ENCODE measurements at regions of chr3 and their contacts with region 1.

Region 1: DNA sequence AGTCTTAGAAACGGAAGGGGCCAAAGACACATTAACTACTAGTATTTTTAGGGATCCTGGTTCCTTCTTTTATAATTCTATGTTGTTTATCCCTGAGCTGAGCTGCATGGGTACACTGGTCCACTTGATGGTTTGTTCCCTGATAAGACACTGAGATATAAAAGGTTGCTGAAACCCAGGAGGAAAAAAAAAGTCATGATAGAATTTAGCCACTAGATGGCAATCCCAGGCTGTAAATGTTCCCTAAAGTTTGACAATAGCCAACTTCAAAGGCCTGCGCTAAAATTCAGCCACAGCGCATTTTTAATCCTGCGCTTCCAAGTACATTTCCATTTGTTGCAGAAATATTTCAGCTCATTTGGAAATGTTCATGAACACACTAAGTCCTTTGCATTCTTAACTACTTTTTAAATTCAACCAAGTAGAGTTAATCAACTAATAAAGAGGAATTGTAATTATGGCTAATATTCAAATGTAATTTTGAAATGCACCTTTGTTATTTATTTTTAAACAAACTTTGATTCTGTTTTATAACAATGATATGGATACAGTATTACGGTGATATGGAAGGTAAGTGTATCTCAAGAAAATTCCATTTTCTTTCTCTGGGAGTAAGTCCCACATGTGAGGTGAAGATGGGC is 249.3 kb upstream of the FEZF2 start:
- DNase-seq: peak; percentile 31
- ATAC-seq: peak; percentile 40; the same call in 1 of the 2 replicates
- H3K4me3 ChIP-seq: no peak overlapping the region
- H3K27ac ChIP-seq: no peak overlapping the region
- H3K4me1 ChIP-seq: no peaks in the 10 kb centered on the region
- H3K27me3 ChIP-seq: peaks cover 39% of the 10 kb centered on the region
- CTCF ChIP-seq: peak; percentile 43 to 65 (median 48); a peak in 5 of 6 replicates
- POLR2A ChIP-seq: no peak
- RAD21 ChIP-seq: peak; percentile 65

Region 2: DNA sequence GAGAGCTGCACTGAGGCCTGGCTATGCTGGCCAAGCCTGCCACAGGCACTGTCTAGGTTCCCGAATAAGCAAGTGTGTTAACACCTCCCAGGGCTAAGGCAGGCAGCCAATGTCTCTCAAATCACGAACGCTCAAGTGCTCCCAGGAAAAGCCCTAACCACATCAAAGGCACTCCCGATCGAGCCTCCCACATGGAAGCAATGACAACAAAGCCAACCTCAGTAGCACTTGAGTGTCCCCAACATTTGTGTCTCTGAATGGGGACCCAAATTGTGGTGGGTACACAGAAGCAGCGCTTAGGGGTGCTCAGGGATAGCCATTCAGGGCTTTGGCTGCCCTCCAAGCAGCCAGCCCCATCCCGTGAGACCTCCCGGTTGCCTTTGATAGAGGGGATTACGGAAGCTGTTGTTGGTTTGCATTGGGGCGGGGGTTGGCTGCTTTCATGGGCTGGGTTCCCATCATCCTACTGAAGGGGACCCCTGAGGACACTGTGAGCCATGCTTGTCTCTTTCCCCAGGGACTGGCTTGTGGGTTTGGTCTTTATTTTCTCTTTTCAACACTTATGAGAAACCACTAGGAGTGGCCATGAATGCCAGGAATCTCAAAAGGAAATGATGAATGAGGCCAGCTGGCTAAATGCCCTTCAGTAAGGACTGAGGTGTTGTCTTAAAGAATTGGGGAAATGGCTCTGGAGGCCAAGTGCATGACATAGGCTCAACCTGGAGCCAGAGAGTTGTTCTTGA is 15.2 kb before region 1 on chr3:
- CTCF ChIA-PET with region 1: no interaction called
- POLR2A ChIA-PET with region 1: no interaction called
- RAD21 ChIA-PET with region 1: no interaction called
- intact Hi-C with region 1: no loop called
- DNase-seq: no peak
- ATAC-seq: peak; percentile 74
- H3K4me3 ChIP-seq: no peak overlapping the region
- H3K27ac ChIP-seq: no peak overlapping the region
- H3K4me1 ChIP-seq: peaks cover 6 to 40% of the 10 kb centered on the region in 2 experiments
- H3K27me3 ChIP-seq: 0 out of 2 replicates have a peak, but pooled peaks cover 9% of the 10 kb centered on the region
- CTCF ChIP-seq: no peak
- POLR2A ChIP-seq: no peak
- RAD21 ChIP-seq: no peak

Region 3: DNA sequence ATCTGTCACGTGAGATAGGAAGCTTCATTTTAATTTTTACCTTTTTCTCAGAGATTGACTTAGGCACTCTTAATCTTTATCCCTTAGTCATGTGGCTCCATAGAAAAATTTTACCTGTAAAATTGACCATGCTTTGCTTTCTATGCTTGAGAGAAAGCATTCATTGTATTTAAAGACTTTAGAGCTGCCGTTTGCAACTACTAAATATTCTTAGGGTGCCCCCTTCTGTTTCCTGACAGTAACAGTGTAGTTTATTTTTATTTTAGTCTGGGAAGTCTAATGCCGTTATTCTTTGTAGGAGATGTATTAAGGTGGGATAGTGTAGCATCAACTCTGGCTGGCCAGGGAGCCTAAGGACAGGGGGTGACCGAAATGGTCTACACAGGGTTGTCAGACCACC is 571.0 kb after region 1 on chr3:
- CTCF ChIA-PET with region 1: no interaction called
- POLR2A ChIA-PET with region 1: no interaction called
- RAD21 ChIA-PET with region 1: no interaction called
- intact Hi-C with region 1: loop called (anchors 2 kb)
- DNase-seq: peak; percentile 3
- ATAC-seq: peak; percentile 44; the same call in 1 of the 2 replicates
- H3K4me3 ChIP-seq: no peak overlapping the region
- H3K27ac ChIP-seq: no peak overlapping the region
- H3K4me1 ChIP-seq: no peaks in the 10 kb centered on the region
- H3K27me3 ChIP-seq: no peaks in the 10 kb centered on the region
- CTCF ChIP-seq: peak; percentile 5 to 47 (median 45); a peak in 3 of 6 replicates
- POLR2A ChIP-seq: no peak
- RAD21 ChIP-seq: peak; percentile 65

Region 4: GRCh38 chr3:63228087-63229023 is 605.7 kb after region 1 on chr3:
- CTCF ChIA-PET with region 1: no interaction called
- POLR2A ChIA-PET with region 1: no interaction called
- RAD21 ChIA-PET with region 1: no interaction called
- intact Hi-C with region 1: loop called (anchors 2 kb)
- DNase-seq: peak; percentile 16
- ATAC-seq: peak; percentile 53
- H3K4me3 ChIP-seq: no peak overlapping the region
- H3K27ac ChIP-seq: no peak overlapping the region
- H3K4me1 ChIP-seq: no peaks in the 10 kb centered on the region
- H3K27me3 ChIP-seq: no peaks in the 10 kb centered on the region
- CTCF ChIP-seq: peak; percentile 22 to 46 (median 38); a peak in 4 of 6 replicates
- POLR2A ChIP-seq: no peak
- RAD21 ChIP-seq: peak; percentile 54

Region 5: GRCh38 chr3:63333842-63334241 is 711.2 kb after region 1 on chr3:
- CTCF ChIA-PET with region 1: no interaction called
- POLR2A ChIA-PET with region 1: no interaction called
- RAD21 ChIA-PET with region 1: no interaction called
- intact Hi-C with region 1: loop called (anchors 2 kb)
- DNase-seq: no peak
- ATAC-seq: no peak
- H3K4me3 ChIP-seq: no peak overlapping the region
- H3K27ac ChIP-seq: no peak overlapping the region
- H3K4me1 ChIP-seq: no peaks in the 10 kb centered on the region
- H3K27me3 ChIP-seq: peaks cover 5% of the 10 kb centered on the region; the same call in 1 of the 2 replicates
- CTCF ChIP-seq: peak; percentile 6 to 31 (median 10); a peak in 2 of 6 replicates
- POLR2A ChIP-seq: no peak
- RAD21 ChIP-seq: no peak

Region 6: GRCh38 chr3:63818281-63819150 is 1195.8 kb after region 1 on chr3:
- CTCF ChIA-PET with region 1: no interaction called
- POLR2A ChIA-PET with region 1: no interaction called
- RAD21 ChIA-PET with region 1: no interaction called
- intact Hi-C with region 1: loop called (anchors 5 kb)
- DNase-seq: peak; percentile 28
- ATAC-seq: peak; percentile 75
- H3K4me3 ChIP-seq: no peak overlapping the region
- H3K27ac ChIP-seq: no peak overlapping the region
- H3K4me1 ChIP-seq: no peaks in the 10 kb centered on the region
- H3K27me3 ChIP-seq: no peaks in the 10 kb centered on the region
- CTCF ChIP-seq: peak; percentile 54 to 93 (median 64); a peak in 5 of 6 replicates
- POLR2A ChIP-seq: no peak
- RAD21 ChIP-seq: peak; percentile 77

Region 7: GRCh38 chr3:63993653-63994079 is 1371.0 kb after region 1 on chr3:
- CTCF ChIA-PET with region 1: no interaction called
- POLR2A ChIA-PET with region 1: no interaction called
- RAD21 ChIA-PET with region 1: no interaction called
- intact Hi-C with region 1: loop called (anchors 10 kb)
- DNase-seq: peak; percentile 27
- ATAC-seq: peak; percentile 98
- H3K4me3 ChIP-seq: no peak overlapping the region
- H3K27ac ChIP-seq: no peak overlapping the region
- H3K4me1 ChIP-seq: no peaks in the 10 kb centered on the region
- H3K27me3 ChIP-seq: no peaks in the 10 kb centered on the region
- CTCF ChIP-seq: peak; percentile 56 to 93 (median 84)
- POLR2A ChIP-seq: no peak
- RAD21 ChIP-seq: peak; percentile 71